PC-9 (cell line): ENCODE measurements at regions of chr7 and their contacts with region 1.

Region 1: GRCh38 chr7:142104550-142105527 is 6.7 kb upstream of the MGAM2 start:
- DNase-seq: peak; percentile 71 to 99
- H3K4me3 ChIP-seq: no peak overlapping the region
- H3K27ac ChIP-seq: peak overlapping the region; percentile 87
- H3K4me1 ChIP-seq: peaks cover 32% of the 10 kb centered on the region
- H3K27me3 ChIP-seq: no peaks in the 10 kb centered on the region
- CTCF ChIP-seq: no peak

Region 2: DNA sequence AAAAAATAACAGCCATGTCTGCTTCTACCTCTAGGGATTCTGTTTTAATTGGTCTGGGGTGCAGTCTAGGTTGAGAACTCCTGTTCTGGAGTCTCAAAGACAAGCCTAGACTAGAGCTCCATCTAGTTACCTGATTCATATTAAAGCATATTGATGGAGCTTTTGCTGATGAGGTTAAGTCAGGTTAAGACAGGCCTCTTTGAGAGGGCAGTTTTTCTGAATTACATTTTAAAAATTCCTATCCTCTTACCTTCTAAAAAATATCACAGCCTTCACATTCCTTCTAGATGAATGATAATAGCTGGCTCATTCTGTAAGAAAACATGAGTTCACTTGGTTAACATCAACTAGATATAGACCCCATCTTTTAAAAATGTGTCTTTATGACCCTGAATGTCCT is 80.3 kb before region 1 on chr7:
- CTCF ChIA-PET with region 1: no interaction called
- POLR2A ChIA-PET with region 1: interaction called, 3 read pairs
- intact Hi-C with region 1: loop called (anchors 5 kb)
- DNase-seq: peak in 1 of 2 experiments; percentile 66
- H3K4me3 ChIP-seq: no peak overlapping the region
- H3K27ac ChIP-seq: no peak overlapping the region
- H3K4me1 ChIP-seq: peaks cover 22% of the 10 kb centered on the region
- H3K27me3 ChIP-seq: no peaks in the 10 kb centered on the region
- CTCF ChIP-seq: no peak